Common myeloid progenitor, CD34-positive (primary cell): ENCODE measurements at regions of chr16 and their contacts with region 1.

Region 1: DNA sequence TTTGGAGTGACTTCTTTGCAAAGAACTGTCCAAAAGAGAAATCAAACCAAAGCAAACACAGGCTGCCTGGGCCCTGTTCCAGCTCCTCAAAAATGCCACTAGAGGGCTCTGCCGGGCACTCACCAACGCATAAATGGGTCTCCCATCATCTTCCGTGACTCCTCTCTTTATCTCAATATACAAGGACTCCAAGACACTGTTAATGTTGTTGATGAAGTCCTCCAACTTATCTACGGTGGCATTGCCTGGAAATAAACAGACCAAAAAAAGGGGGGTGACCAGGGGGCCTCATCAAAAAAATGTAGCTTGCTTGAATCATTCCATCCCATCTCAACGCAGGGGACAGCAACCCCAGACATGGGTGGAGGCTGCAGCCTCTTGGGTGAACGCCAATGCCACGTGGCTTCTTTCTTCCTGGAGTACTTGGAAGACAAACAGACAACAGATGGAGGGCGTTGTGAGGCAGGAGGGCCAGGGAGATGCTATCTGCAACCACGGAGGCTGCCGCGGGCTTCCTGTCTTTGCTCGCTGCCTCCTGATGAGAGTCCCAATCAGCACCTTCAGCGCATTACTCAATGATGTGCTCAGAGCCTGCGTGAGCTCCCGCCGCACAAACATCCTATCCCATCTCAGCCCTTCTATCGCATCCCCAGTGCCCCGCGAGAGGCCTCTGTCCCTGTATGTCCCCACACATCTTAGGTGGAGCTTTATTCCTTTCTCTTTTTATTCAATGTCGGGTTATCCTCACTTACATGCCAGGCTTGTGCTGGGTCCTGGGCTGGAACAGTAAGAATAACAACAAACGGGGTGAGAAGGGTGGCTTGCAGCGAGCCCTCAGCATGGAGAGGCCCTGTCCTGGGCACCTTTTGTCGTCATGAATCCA is 32.0 kb downstream of the KDM8 start:
- DNase-seq: peak; percentile 95 to 99 (median 98)
- H3K4me3 ChIP-seq: peak overlapping the region in 4 of 7 experiments; percentile 21 to 43 (median 34)
- H3K27ac ChIP-seq: peak overlapping the region; percentile 48 to 79
- H3K4me1 ChIP-seq: peaks cover 15 to 99% (median 93%) of the 10 kb centered on the region in 4 experiments
- H3K27me3 ChIP-seq: no peaks in the 10 kb centered on the region

Region 2: DNA sequence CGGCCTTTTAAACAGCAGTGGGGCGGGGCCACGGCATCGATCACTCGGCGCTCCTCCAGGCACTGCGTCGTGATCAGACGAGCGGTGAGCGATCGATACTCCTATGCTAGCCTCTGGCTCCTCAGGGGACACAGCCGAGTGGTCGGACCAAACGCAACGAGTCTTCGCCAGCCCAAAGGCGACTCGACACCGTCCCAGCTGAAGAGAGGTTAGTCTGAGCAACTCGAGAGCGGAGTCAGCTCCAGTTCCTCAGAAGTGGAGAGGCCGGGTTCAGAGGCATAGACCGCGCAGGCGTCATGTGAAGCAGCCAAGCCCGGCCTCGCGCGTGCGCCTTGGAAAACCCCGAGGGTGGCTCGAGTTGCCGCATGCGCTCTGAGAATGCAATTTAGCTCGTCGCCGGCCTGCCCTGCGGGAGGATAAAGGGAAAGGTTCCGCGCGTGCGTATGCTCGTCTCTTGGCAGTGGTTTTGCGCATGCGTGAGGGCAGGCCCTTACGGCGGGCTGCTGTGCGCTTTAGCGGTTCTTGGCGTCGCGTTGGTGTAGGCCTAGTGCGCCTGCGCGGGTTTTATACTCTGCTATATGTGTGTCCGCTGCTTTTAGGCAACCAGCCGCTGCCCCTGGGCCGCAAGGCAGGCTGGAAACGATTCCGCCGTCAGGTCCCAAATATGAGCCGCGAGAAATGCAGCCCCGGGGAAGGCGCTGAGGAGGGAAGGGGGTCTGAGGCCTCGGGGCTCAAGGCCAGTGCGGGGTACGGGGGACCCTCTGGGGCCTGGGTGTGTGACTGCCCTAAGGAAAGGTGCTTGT is 31.7 kb before region 1 on chr16 and contains the start of gene KDM8:
- CTCF ChIA-PET with region 1: interaction called, 15 read pairs
- POLR2A ChIA-PET with region 1: no interaction called
- DNase-seq: peak; percentile 99 to 100 (median 100)
- H3K4me3 ChIP-seq: peak within 1 kb of the TSS; percentile 84 to 97 (median 91)
- H3K27ac ChIP-seq: peak within 1 kb of the TSS; percentile 95 to 97
- H3K4me1 ChIP-seq: peaks cover 20 to 29% (median 25%) of the 10 kb centered on the region in 4 experiments
- H3K27me3 ChIP-seq: no peaks in the 10 kb centered on the region

Region 3: GRCh38 chr16:27208796-27209195 is 26.5 kb before region 1 on chr16:
- CTCF ChIA-PET with region 1: interaction called, 15 read pairs
- POLR2A ChIA-PET with region 1: no interaction called
- DNase-seq: no peak
- H3K4me3 ChIP-seq: no peak overlapping the region
- H3K27ac ChIP-seq: no peak overlapping the region
- H3K4me1 ChIP-seq: peaks cover 0 to 11% (median 8%) of the 10 kb centered on the region in 4 experiments
- H3K27me3 ChIP-seq: no peaks in the 10 kb centered on the region

Region 4: GRCh38 chr16:27222249-27223225 is 12.8 kb before region 1 on chr16:
- CTCF ChIA-PET with region 1: interaction called, 34 read pairs
- POLR2A ChIA-PET with region 1: no interaction called
- DNase-seq: no peak
- H3K4me3 ChIP-seq: no peak overlapping the region
- H3K27ac ChIP-seq: no peak overlapping the region
- H3K4me1 ChIP-seq: peaks cover 0 to 16% (median 11%) of the 10 kb centered on the region in 4 experiments
- H3K27me3 ChIP-seq: no peaks in the 10 kb centered on the region

Region 5: DNA sequence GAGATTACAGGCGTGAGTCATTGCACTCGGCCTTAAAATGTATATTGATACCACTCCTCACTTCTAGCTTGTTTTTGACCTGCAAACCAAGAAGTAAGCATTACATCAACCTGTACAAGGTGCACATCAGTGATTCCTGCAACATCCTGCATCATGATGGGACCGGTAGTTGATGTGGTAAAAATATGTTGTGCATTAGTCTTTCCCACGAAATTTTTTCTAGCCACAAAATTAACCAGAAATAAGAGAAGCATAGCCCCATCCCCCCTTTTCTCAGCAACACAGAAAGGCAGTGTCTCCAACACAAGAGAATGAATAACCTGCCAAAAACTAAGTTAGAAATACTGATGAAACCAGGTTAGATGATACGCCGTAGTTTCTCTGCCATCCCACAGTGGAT is 54.4 kb after region 1 on chr16:
- CTCF ChIA-PET with region 1: no interaction called
- POLR2A ChIA-PET with region 1: no interaction called
- DNase-seq: no peak
- H3K4me3 ChIP-seq: no peak overlapping the region
- H3K27ac ChIP-seq: no peak overlapping the region
- H3K4me1 ChIP-seq: peaks cover 0 to 10% (median 6%) of the 10 kb centered on the region in 4 experiments
- H3K27me3 ChIP-seq: no peaks in the 10 kb centered on the region

Region 6: GRCh38 chr16:27315277-27316037 is 80.2 kb after region 1 on chr16:
- CTCF ChIA-PET with region 1: interaction called, 10 read pairs
- POLR2A ChIA-PET with region 1: no interaction called
- DNase-seq: peak in 2 of 3 donors; percentile 21 to 32
- H3K4me3 ChIP-seq: peak overlapping the region in 3 of 7 experiments; percentile 12 to 81 (median 64)
- H3K27ac ChIP-seq: no peak overlapping the region
- H3K4me1 ChIP-seq: peaks cover 7 to 67% (median 40%) of the 10 kb centered on the region in 4 experiments
- H3K27me3 ChIP-seq: no peaks in the 10 kb centered on the region

Region 7: GRCh38 chr16:27367461-27368357 is 132.4 kb after region 1 on chr16:
- CTCF ChIA-PET with region 1: interaction called, 70 read pairs
- POLR2A ChIA-PET with region 1: interaction called, 14 read pairs
- DNase-seq: peak; percentile 98 to 99 (median 99)
- H3K4me3 ChIP-seq: peak overlapping the region in 5 of 7 experiments; percentile 13 to 54 (median 45)
- H3K27ac ChIP-seq: peak overlapping the region; percentile 90 to 93
- H3K4me1 ChIP-seq: peaks cover 4 to 35% (median 30%) of the 10 kb centered on the region in 4 experiments
- H3K27me3 ChIP-seq: no peaks in the 10 kb centered on the region